ENCODE measurements at regions of chr3 and their contacts with region 1.

Region 1: GRCh38 chr3:185942907-185943759 is 5.3 kb upstream of the TRA2B start:
- DNase-seq: peak; percentile 72
- ATAC-seq: peak; percentile 91
- H3K4me3 ChIP-seq: no peak overlapping the region
- H3K27ac ChIP-seq: no peak overlapping the region
- H3K4me1 ChIP-seq: peaks cover 0 to 22% of the 10 kb centered on the region in 2 experiments; a peak in 3 of 4 replicates
- H3K27me3 ChIP-seq: no peaks in the 10 kb centered on the region
- CTCF ChIP-seq: peak; percentile 72 to 99 (median 99); a peak in 5 of 6 replicates
- POLR2A ChIP-seq: no peak
- RAD21 ChIP-seq: peak; percentile 68

Region 2: GRCh38 chr3:185912929-185913901 is 29.9 kb before region 1 on chr3:
- CTCF ChIA-PET with region 1: interaction called, 10 read pairs
- POLR2A ChIA-PET with region 1: no interaction called
- RAD21 ChIA-PET with region 1: interaction called in 1 of 2 experiments, 5 read pairs
- intact Hi-C with region 1: no loop called
- DNase-seq: no peak
- ATAC-seq: peak; percentile 8; the same call in 1 of the 2 replicates
- H3K4me3 ChIP-seq: no peak overlapping the region
- H3K27ac ChIP-seq: no peak overlapping the region
- H3K4me1 ChIP-seq: peaks cover 0 to 3% of the 10 kb centered on the region in 2 experiments; a peak in 1 of 4 replicates
- H3K27me3 ChIP-seq: no peaks in the 10 kb centered on the region
- CTCF ChIP-seq: no peak
- POLR2A ChIP-seq: no peak
- RAD21 ChIP-seq: no peak

Region 3: GRCh38 chr3:185959609-185960517 is 16.7 kb after region 1 on chr3:
- CTCF ChIA-PET with region 1: interaction called, 65 read pairs
- POLR2A ChIA-PET with region 1: no interaction called
- RAD21 ChIA-PET with region 1: no interaction called
- intact Hi-C with region 1: no loop called
- DNase-seq: no peak
- ATAC-seq: peak; percentile 57
- H3K4me3 ChIP-seq: no peak overlapping the region
- H3K27ac ChIP-seq: no peak overlapping the region
- H3K4me1 ChIP-seq: peaks cover 7 to 12% of the 10 kb centered on the region in 2 experiments; a peak in 3 of 4 replicates
- H3K27me3 ChIP-seq: no peaks in the 10 kb centered on the region
- CTCF ChIP-seq: no peak
- POLR2A ChIP-seq: no peak
- RAD21 ChIP-seq: no peak

Region 4: DNA sequence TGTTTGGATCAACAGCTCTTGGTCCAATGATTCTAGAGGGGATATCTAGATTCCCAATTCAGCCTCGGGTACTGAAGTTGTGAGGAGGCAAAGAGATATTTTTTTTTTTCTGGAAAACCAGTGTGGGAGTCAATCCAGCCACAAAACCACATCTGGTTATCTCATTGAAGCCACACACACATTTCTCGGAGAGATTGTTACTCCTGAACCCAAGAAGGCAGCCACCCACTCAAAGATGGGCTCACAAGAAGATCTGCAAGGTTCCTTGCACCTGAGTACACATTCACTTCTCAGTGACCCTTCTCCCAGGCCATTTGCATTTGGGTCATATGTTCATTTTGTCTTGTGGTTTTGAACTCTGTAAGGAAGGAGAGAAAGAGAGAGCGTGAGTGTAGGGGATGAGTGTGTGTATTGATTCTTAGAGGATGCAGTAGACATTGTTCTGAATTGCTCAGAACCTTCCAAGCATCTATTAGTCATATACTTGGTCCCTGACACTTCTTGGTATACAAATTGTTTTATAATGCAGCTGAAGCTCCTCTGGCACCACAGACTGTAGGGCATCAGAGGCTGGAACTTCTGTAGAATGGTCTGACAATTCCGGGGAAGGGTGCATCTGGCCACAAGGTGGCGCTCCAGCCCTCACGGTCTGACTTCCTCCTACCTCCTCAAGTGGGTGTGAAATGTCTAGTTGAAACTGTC is 34.0 kb after region 1 on chr3:
- CTCF ChIA-PET with region 1: interaction called, 10 read pairs
- POLR2A ChIA-PET with region 1: no interaction called
- RAD21 ChIA-PET with region 1: no interaction called
- intact Hi-C with region 1: no loop called
- DNase-seq: peak; percentile 57
- ATAC-seq: peak; percentile 100
- H3K4me3 ChIP-seq: no peak overlapping the region
- H3K27ac ChIP-seq: no peak overlapping the region
- H3K4me1 ChIP-seq: peaks cover 0 to 8% of the 10 kb centered on the region in 2 experiments; a peak in 1 of 4 replicates
- H3K27me3 ChIP-seq: no peaks in the 10 kb centered on the region
- CTCF ChIP-seq: peak; percentile 80 to 97 (median 95)
- POLR2A ChIP-seq: no peak
- RAD21 ChIP-seq: peak; percentile 84